Activated CD4-positive, alpha-beta memory T cell treated with anti-CD3 and anti-CD28 coated beads, Interleukin-2, amount 10 ng/mL, durations not matched to agents 7 days and 5 days (primary cell): ENCODE measurements at regions of chr20 and their contacts with region 1.

Region 1: GRCh38 chr20:51480507-51481270 is 61.8 kb downstream of the NFATC2 start:
- DNase-seq: peak; percentile 50
- H3K4me3 Mint-ChIP-seq: peak overlapping the region; percentile 58
- H3K27ac Mint-ChIP-seq: peak overlapping the region; percentile 80
- H3K4me1 Mint-ChIP-seq: peaks cover 86% of the 10 kb centered on the region
- H3K27me3 Mint-ChIP-seq: no peaks in the 10 kb centered on the region

Region 2: DNA sequence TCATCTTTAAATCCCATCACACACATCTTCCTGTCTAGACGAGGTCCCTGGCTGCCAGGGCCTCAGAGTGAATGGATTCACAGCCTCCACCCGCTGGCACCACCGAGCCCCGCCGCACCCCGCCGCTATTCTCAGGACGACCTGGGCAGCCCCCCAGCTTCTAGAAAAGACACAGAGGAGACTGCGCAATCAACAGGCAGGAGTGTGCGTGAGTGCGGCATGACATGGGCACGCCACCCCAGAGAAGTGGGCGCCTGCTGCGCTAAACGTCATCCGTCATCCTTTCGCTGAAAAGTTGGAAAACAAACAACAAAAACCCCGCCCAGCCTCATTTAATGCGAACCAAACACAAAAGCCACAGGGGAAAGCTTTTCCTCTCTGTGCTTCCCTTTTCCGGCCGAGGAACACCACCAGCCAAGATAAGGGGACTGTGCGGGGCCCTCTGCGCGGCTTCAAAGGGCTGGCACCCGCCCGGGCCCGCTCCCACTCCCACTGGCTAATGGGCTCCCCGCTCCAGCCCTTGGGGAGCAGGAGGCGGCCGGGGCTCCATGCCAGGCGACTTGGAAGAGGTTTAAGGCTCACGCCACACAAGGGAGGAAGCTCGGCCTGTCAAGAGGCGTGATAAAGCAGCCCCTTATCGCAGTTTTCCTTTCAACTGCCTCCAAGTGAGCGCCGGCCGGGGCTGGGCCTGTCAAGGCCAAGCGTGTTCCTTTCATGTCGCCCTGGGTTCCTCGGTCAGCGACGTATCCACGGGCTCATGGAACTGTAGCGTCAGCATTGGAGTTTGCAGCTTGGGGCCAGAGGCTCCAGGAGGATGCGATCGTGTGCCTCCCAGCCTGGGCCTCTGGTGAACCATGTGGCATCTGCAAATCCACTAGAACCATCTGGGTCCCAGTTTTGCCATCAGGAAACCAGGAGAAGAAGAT is 11.7 kb after region 1 on chr20:
- CTCF ChIA-PET with region 1: interaction called, 4 read pairs
- POLR2A ChIA-PET with region 1: interaction called, 23 read pairs
- DNase-seq: no peak
- H3K4me3 Mint-ChIP-seq: no peak overlapping the region
- H3K27ac Mint-ChIP-seq: no peak overlapping the region
- H3K4me1 Mint-ChIP-seq: peaks cover 82% of the 10 kb centered on the region
- H3K27me3 Mint-ChIP-seq: no peaks in the 10 kb centered on the region